Mammary epithelial cell (primary cell): ENCODE measurements at regions of chr12 and their contacts with region 1.

Region 1: GRCh38 chr12:53231826-53232645 is at the start of gene RARG:
- DNase-seq: peak; percentile 77
- H3K4me3 ChIP-seq: peak within 1 kb of the TSS; percentile 77 to 88 (median 80)
- H3K27ac ChIP-seq: peak within 1 kb of the TSS; percentile 67
- H3K4me1 ChIP-seq: peaks cover 58% of the 10 kb centered on the region
- H3K27me3 ChIP-seq: no peaks in the 10 kb centered on the region
- CTCF ChIP-seq: no peak
- total RNA-seq, gene RARG: 33.5 to 79.0 TPM

Region 2: DNA sequence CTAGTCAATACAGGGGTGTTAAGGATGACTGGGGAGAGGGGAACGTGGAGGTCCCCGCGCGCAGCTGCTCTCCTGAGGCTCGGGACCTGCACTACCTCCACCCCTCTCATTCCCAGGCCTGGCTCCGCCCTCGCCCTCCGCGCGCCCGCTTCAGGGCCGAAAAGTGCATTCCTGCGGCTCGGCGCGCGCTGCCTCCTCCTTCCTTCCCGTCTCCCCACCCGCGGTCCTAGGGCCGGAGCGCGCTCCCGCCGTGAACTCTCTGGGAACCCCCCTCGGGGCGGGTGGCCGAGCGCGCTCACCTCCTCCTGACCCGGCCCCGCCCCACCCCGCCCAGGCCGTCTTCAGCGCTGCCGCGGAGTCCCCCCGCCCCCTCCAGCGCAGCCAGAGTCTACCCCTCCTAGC is 11.2 kb before region 1 on chr12:
- CTCF ChIA-PET with region 1: no interaction called
- dilution Hi-C with region 1: no loop called
- in situ Hi-C with region 1: no loop called
- intact Hi-C with region 1: loop called (anchors 1 kb)
- DNase-seq: peak; percentile 93
- H3K4me3 ChIP-seq: peak overlapping the region; percentile 48 to 60 (median 55)
- H3K27ac ChIP-seq: no peak overlapping the region
- H3K4me1 ChIP-seq: peaks cover 83% of the 10 kb centered on the region
- H3K27me3 ChIP-seq: no peaks in the 10 kb centered on the region
- CTCF ChIP-seq: no peak